SK-N-SH (cell line): ENCODE measurements at regions of chr2 and their contacts with region 1.

Region 1: GRCh38 chr2:178317811-178318210 is 123.5 kb downstream of the OSBPL6 start:
- DNase-seq: no peak
- H3K4me3 ChIP-seq: no peak overlapping the region
- H3K27ac ChIP-seq: no peak overlapping the region
- H3K4me1 ChIP-seq: peaks cover 0 to 7% of the 10 kb centered on the region in 2 experiments; a peak in 2 of 4 replicates
- H3K27me3 ChIP-seq: no peaks in the 10 kb centered on the region
- CTCF ChIP-seq: no peak
- EP300 ChIP-seq: no peak
- RAD21 ChIP-seq: no peak

Region 2: GRCh38 chr2:177568390-177568789 is 749.4 kb before region 1 on chr2:
- CTCF ChIA-PET with region 1: no interaction called
- POLR2A ChIA-PET with region 1: no interaction called
- DNase-seq: no peak
- H3K4me3 ChIP-seq: no peak overlapping the region
- H3K27ac ChIP-seq: no peak overlapping the region
- H3K4me1 ChIP-seq: peaks cover 3 to 5% of the 10 kb centered on the region in 2 experiments; a peak in 3 of 4 replicates
- H3K27me3 ChIP-seq: no peaks in the 10 kb centered on the region
- CTCF ChIP-seq: no peak
- EP300 ChIP-seq: no peak
- RAD21 ChIP-seq: no peak

Region 3: GRCh38 chr2:177929662-177930522 is 387.9 kb before region 1 on chr2:
- CTCF ChIA-PET with region 1: no interaction called
- POLR2A ChIA-PET with region 1: no interaction called
- DNase-seq: no peak
- H3K4me3 ChIP-seq: no peak overlapping the region; a peak in 1 of 4 replicates
- H3K27ac ChIP-seq: no peak overlapping the region
- H3K4me1 ChIP-seq: no peaks in the 10 kb centered on the region
- H3K27me3 ChIP-seq: no peaks in the 10 kb centered on the region
- CTCF ChIP-seq: no peak
- EP300 ChIP-seq: no peak
- RAD21 ChIP-seq: no peak

Region 4: DNA sequence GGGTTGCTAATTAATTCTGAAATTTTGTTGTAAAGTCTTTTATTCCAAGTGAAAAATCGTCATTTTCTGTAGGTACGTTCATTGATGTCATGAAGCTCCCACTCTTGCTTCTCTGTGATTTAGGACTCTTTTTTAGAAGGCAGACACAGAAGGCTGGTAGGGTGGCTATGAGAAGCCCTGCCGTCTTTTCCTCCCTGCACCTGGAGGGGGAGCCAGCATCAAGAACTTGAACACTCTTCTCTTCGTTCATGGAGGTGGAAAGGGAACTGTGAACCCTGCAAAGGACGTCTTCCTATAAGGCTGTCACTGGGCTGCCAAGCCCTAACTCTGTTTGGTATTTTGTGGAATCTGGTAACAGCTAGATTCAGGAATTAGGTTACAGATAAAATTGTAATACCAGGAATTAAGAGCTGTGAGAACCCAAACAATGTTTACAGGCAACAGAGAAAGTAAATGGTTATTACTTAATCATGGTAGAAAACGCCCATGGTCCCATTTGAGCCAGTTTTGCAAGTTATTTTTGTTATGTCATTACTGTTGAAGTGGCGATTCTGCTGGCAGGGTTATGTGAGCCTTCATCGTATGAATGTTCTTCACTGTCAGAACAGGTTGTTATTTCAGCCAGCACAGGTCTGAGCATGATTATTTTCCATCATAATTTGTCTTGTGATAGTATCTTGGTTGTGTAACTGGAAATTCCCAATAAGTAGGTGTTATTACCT is 11.3 kb before region 1 on chr2:
- CTCF ChIA-PET with region 1: interaction called, 16 read pairs
- POLR2A ChIA-PET with region 1: no interaction called
- DNase-seq: peak; percentile 47
- H3K4me3 ChIP-seq: no peak overlapping the region
- H3K27ac ChIP-seq: no peak overlapping the region
- H3K4me1 ChIP-seq: no peaks in the 10 kb centered on the region
- H3K27me3 ChIP-seq: no peaks in the 10 kb centered on the region
- CTCF ChIP-seq: peak; percentile 52
- EP300 ChIP-seq: no peak
- RAD21 ChIP-seq: peak; percentile 81

Region 5: GRCh38 chr2:178328037-178328436 is 10.2 kb after region 1 on chr2:
- CTCF ChIA-PET with region 1: no interaction called
- POLR2A ChIA-PET with region 1: no interaction called
- DNase-seq: no peak
- H3K4me3 ChIP-seq: no peak overlapping the region
- H3K27ac ChIP-seq: peak overlapping the region in 1 of 2 experiments; percentile 9; a peak in 1 of 4 replicates
- H3K4me1 ChIP-seq: 0 out of 4 replicates have a peak, but pooled peaks cover 0 to 9% of the 10 kb centered on the region in 2 experiments
- H3K27me3 ChIP-seq: no peaks in the 10 kb centered on the region
- CTCF ChIP-seq: no peak
- EP300 ChIP-seq: no peak
- RAD21 ChIP-seq: no peak